Breast epithelium (tissue), 4 donors: ENCODE measurements at regions of chr1 and their contacts with region 1.

Region 1: GRCh38 chr1:34441259-34442069 is 264.8 kb downstream of the C1orf94 start:
- DNase-seq: no peak
- H3K4me3 ChIP-seq: no peak overlapping the region
- H3K27ac ChIP-seq: no peak overlapping the region
- H3K4me1 ChIP-seq: no peaks in the 10 kb centered on the region
- H3K27me3 ChIP-seq: peaks cover 0 to 11% of the 10 kb centered on the region in 2 donors
- CTCF ChIP-seq: no peak
- POLR2A ChIP-seq: no peak

Region 2: DNA sequence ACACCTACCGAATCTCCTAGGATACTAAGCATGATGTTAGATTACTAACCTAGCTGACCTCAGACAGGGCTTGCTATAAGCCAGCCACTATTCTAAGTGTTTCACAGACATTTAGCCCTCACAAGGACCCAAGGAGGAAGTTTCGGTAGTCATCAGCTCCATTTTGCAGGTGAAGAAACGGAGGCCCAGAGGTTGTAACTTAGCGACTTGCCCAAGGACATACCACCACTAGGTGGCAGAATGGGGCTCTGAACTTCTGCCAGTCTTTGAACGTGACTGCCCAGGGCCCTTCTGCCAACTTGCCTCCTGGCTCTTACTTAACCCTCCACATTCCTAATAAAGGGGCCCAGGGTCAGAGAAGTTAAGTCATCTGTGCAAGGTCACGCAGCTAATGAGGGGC is 18.7 kb after region 1 on chr1:
- intact Hi-C with region 1: loop called (anchors 2 kb)
- DNase-seq: no peak
- H3K4me3 ChIP-seq: no peak overlapping the region
- H3K27ac ChIP-seq: no peak overlapping the region
- H3K4me1 ChIP-seq: no peaks in the 10 kb centered on the region
- H3K27me3 ChIP-seq: no peaks in the 10 kb centered on the region
- CTCF ChIP-seq: peak in 1 of 3 donors; percentile 19
- POLR2A ChIP-seq: no peak